Activated B cell treated with CpG ODN at 0.5 μM for 24 hours (primary cell): ENCODE measurements at regions of chr20 and their contacts with region 1.

Region 1: DNA sequence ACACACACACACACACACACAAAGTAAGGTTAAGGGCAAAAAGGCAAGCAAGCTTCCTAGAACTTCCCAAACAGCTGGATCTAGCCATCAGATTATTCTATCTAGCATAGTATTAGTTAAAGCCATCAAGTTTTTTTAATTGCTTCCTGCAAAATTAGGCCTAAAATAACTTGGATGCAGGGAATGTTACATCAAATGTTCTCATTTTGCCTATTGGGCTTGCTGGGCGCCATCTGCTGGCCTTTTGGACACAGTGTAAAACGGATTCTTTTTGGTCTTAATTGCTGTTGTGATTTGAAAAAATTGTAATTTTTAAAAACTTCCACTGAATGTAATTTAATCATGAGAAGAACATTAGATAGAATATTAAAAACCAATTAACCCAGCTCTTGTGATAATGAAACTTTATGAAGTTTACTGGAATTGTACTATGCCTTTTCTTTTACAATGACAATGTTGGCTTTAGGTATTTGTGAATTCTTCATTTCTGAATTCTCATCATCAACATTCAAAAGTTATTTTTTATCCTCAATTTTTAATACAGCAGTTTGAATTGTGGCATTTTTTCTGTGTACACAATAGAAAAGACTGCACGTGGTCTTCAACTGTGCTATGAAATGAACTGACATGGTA is 6.8 kb downstream of the MKKS start:
- DNase-seq: no peak
- ATAC-seq: no peak
- H3K4me3 Mint-ChIP-seq: no peak overlapping the region
- H3K27ac Mint-ChIP-seq: no peak overlapping the region
- H3K4me1 Mint-ChIP-seq: peaks cover 27% of the 10 kb centered on the region
- H3K27me3 Mint-ChIP-seq: no peaks in the 10 kb centered on the region
- CTCF ChIP-seq: peak; percentile 65

Region 2: DNA sequence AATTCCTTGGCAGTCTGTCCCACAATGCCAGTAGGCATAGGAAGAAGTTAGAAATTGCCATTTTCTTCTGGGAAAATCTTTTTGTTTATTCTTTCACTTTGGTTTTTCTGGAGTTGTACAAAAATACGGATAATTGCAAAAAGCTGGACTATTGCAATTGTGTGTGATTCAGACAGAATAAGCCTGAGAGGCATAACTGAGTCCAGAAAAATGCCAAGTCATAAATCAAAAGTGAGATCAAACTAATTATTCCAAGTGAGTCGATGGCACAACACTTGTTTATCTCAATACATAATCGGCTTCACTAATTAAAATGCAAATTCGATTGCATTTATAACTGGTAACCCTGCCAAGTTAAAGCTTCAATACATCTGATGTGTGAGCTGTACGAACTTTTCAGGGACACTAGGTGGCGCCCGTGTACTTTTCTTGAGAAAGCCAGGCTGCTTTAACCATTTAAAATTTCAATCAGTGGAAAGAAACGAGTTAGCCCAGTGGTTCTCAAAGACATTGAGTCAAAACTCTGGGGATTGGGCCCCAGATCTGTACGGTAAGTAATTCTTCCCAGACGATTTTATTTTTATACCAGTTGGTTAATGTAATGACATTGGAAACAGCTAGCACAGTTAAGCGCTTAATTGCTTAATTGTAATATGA is 810.2 kb before region 1 on chr20:
- CTCF ChIA-PET with region 1: interaction called, 10 read pairs
- POLR2A ChIA-PET with region 1: no interaction called
- intact Hi-C with region 1: no loop called
- DNase-seq: no peak
- ATAC-seq: no peak
- H3K4me3 Mint-ChIP-seq: no peak overlapping the region
- H3K27ac Mint-ChIP-seq: no peak overlapping the region
- H3K4me1 Mint-ChIP-seq: peaks cover 9% of the 10 kb centered on the region
- H3K27me3 Mint-ChIP-seq: peaks cover 18% of the 10 kb centered on the region
- CTCF ChIP-seq: no peak

Region 3: DNA sequence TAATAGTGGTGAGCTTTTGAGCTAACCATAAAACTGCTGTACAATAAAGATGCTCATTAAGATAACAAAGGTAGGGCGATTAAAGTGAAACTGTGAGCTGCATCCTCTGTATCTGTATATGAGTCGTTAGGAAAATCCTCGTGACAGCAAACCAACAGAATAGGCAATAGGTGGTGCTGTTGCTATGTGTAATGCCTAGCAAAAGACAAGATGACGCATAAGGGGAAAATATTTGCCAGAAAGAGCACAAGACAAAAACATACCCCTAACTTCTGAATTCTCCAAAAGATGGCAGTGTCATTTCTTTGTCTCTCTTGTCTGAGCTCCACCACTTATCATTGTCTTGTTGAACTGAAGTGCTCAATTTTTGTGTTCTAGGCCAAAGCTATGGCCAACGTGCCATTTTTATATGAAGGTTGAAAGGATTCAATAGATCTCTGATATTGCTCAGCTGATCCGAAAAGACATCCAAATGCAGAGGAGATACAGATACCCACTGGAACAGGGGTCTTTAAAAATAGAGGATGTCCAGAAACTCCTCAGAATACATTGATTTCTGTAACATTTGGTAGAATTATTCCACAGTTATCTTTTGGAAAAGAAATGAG is 448.7 kb before region 1 on chr20:
- CTCF ChIA-PET with region 1: interaction called, 65 read pairs
- POLR2A ChIA-PET with region 1: no interaction called
- intact Hi-C with region 1: loop called (anchors 1 kb)
- DNase-seq: no peak
- ATAC-seq: peak; percentile 83
- H3K4me3 Mint-ChIP-seq: no peak overlapping the region
- H3K27ac Mint-ChIP-seq: no peak overlapping the region
- H3K4me1 Mint-ChIP-seq: no peaks in the 10 kb centered on the region
- H3K27me3 Mint-ChIP-seq: peaks cover 9% of the 10 kb centered on the region
- CTCF ChIP-seq: peak; percentile 63

Region 4: GRCh38 chr20:10271494-10272219 is 155.5 kb before region 1 on chr20:
- CTCF ChIA-PET with region 1: no interaction called
- POLR2A ChIA-PET with region 1: no interaction called
- intact Hi-C with region 1: no loop called
- DNase-seq: no peak
- ATAC-seq: no peak
- H3K4me3 Mint-ChIP-seq: no peak overlapping the region
- H3K27ac Mint-ChIP-seq: no peak overlapping the region
- H3K4me1 Mint-ChIP-seq: no peaks in the 10 kb centered on the region
- H3K27me3 Mint-ChIP-seq: no peaks in the 10 kb centered on the region
- CTCF ChIP-seq: no peak